Activated CD4-positive, alpha-beta T cell treated with anti-CD3 and anti-CD28 coated beads for 36 hours (primary cell): ENCODE measurements at regions of chr9 and their contacts with region 1.

Region 1: DNA sequence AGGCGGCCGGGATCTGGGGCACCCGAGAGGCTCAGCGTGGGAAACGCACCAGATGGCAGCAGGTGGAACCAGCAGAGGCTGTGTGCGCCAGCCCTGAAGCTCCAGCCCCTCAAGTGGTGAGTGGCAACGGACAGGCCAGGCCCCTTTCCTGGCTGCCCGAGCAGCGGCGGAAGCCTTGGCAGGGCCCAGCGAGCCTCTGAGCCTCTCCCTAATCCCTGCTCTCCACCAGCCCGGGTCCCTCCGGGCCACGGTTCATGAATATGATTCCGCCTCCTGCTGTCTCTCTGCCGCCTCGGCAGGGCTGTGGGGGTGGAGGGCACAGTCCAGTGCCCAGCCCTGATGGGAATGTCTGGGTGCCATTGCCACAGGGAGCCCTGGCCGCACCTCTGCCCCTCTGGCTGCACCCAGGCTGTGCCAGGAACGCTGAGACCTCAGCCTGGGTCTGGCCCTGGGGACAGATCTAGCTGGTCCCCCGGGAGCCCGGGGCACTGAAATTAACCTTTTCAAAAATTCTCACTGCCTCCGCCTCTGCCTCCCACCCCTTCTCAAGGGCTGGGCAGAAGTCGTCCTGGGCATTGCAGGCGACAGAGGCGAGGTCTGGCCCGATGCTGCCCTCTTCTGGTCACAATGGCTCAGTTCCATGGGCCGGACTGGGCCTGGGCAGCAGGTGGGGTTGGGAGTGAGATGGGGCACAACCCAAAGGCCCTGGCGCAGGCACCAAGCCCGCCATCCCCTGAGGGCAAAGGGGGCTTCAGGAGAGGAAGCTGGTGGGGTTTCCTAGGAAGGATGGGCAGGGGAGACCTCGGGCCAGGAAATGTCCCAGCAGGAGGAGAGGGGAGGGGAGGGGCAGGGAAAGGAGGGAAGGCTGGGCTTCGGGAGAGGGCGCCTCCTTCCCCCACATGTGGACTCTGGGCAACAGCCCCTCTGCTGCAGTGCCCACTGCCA is 20.3 kb downstream of the CCDC187 start:
- DNase-seq: peak; percentile 86
- ATAC-seq: peak; percentile 98
- H3K4me3 Mint-ChIP-seq: no peak overlapping the region
- H3K27ac Mint-ChIP-seq: no peak overlapping the region
- H3K4me1 Mint-ChIP-seq: peaks cover 4% of the 10 kb centered on the region
- H3K27me3 Mint-ChIP-seq: peaks cover 2% of the 10 kb centered on the region

Region 2: DNA sequence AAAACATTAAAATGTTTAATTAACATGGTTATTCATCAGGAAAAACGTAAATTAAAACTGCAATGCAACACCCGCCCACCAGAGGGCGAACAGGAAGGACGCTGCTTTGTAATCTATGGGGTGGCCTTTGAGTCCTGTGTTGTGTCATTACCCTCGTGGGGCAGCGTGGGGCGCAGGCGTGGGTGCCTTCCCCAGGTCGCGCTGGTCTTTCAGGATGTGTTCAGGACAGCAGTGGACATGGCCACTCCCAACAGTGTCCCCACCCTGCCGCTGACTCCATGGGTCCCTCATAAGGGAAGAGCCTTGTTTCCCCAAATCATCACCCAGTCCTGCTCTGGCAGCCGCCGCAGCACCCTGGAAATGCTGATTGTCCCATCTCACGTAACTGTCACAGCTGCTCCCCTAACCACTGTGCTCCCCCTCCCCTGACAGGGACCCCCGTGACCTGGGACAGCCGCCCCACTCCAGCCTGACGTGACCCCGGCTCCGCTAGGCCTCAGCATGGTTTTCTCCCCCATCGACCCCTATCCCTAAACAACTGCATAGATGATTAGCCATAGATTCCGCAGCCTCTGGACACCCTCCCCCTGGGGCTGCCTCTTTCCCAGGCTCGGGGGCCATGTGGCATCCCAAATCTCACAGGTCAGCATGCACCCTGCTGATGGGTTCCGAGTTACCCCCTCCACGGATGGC is 680.6 kb before region 1 on chr9:
- CTCF ChIA-PET with region 1: no interaction called
- POLR2A ChIA-PET with region 1: no interaction called
- intact Hi-C with region 1: loop called in 1 of 2 experiments (anchors 2 kb)
- DNase-seq: peak; percentile 75
- ATAC-seq: peak; percentile 58
- H3K4me3 Mint-ChIP-seq: no peak overlapping the region
- H3K27ac Mint-ChIP-seq: no peak overlapping the region
- H3K4me1 Mint-ChIP-seq: no peaks in the 10 kb centered on the region
- H3K27me3 Mint-ChIP-seq: peaks cover 10% of the 10 kb centered on the region

Region 3: DNA sequence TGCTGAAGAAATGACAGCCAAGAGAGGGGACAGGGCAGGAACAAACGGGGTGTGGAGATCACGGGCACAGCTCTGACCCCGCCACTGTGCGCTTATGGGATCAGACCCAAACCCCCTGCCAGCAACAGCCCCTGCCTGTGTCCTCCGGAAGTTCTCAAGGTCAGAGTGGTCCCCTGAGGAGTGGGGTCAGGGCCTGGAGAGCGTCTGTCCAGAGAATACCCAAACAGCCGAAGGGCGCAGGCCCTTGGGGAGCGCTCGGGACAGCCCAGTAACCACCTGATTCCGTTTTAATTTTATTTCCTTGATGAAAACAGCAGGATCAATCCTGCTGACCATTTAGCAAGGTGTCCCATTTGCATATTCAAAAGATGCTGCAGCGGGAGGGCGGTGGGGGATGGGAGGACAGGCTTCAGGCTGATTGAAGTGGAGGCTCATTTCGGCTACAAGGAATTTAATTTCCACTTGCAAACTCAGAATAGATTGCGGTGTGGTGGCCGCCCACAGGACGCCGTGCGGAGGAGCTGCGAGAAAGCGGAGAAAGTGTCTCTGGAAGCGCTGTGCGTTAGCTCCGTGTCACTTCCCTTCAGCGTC is 132.3 kb before region 1 on chr9:
- CTCF ChIA-PET with region 1: no interaction called
- POLR2A ChIA-PET with region 1: no interaction called
- intact Hi-C with region 1: loop called in 1 of 2 experiments (anchors 5 kb)
- DNase-seq: peak; percentile 27
- ATAC-seq: peak; percentile 9
- H3K4me3 Mint-ChIP-seq: no peak overlapping the region
- H3K27ac Mint-ChIP-seq: no peak overlapping the region
- H3K4me1 Mint-ChIP-seq: no peaks in the 10 kb centered on the region
- H3K27me3 Mint-ChIP-seq: peaks cover 5% of the 10 kb centered on the region

Region 4: DNA sequence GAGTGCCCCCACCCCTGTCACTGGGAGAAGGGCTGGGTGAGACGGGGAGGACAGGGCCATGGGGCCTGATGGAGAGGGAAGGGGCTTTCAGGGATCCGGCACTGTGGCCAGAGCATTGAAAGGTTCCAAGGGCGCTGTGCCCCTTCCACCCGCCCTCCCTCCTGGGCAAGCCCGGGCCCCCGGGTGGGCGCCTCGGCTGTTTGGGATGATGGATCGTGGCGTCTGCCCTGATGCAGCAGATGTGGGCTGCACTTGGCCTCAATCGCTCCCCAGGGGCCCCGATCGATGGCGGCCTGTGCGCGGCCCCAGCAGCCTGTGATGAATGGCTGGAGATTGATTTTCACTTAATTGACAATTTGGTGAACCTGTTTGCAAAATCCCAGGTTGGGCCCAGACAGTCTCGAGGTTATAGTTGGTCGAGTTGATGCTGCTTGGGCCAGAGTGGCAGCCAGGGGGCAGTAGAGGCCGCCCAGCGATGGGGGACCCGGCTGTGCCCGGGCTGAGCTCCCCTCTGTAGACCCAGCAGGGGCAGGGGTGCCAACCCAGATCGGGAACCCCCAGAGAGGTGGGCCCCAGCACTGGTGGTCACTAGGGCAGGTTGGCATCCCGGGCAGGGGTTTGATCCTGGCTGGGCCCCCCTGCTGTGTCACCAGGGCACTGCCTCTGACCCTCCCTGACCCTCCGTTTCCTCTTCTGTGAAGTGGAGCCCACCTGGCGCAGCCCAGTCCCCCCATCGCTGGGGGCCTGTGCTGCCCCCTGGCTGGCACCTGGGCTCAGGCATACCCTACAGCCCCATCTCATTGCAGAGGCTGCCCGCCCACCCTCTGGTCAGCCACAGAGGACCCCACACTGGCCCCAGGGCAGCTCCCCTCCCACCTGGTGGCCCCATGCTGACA is 113.3 kb before region 1 on chr9:
- CTCF ChIA-PET with region 1: interaction called, 6 read pairs
- POLR2A ChIA-PET with region 1: no interaction called
- intact Hi-C with region 1: loop called (anchors 1 kb)
- DNase-seq: peak; percentile 80
- ATAC-seq: peak; percentile 88
- H3K4me3 Mint-ChIP-seq: no peak overlapping the region
- H3K27ac Mint-ChIP-seq: no peak overlapping the region
- H3K4me1 Mint-ChIP-seq: no peaks in the 10 kb centered on the region
- H3K27me3 Mint-ChIP-seq: peaks cover 6% of the 10 kb centered on the region

Region 5: GRCh38 chr9:136211441-136212344 is 71.9 kb before region 1 on chr9:
- CTCF ChIA-PET with region 1: no interaction called
- POLR2A ChIA-PET with region 1: no interaction called
- intact Hi-C with region 1: no loop called
- DNase-seq: no peak
- ATAC-seq: no peak
- H3K4me3 Mint-ChIP-seq: no peak overlapping the region
- H3K27ac Mint-ChIP-seq: no peak overlapping the region
- H3K4me1 Mint-ChIP-seq: no peaks in the 10 kb centered on the region
- H3K27me3 Mint-ChIP-seq: no peaks in the 10 kb centered on the region

Region 6: DNA sequence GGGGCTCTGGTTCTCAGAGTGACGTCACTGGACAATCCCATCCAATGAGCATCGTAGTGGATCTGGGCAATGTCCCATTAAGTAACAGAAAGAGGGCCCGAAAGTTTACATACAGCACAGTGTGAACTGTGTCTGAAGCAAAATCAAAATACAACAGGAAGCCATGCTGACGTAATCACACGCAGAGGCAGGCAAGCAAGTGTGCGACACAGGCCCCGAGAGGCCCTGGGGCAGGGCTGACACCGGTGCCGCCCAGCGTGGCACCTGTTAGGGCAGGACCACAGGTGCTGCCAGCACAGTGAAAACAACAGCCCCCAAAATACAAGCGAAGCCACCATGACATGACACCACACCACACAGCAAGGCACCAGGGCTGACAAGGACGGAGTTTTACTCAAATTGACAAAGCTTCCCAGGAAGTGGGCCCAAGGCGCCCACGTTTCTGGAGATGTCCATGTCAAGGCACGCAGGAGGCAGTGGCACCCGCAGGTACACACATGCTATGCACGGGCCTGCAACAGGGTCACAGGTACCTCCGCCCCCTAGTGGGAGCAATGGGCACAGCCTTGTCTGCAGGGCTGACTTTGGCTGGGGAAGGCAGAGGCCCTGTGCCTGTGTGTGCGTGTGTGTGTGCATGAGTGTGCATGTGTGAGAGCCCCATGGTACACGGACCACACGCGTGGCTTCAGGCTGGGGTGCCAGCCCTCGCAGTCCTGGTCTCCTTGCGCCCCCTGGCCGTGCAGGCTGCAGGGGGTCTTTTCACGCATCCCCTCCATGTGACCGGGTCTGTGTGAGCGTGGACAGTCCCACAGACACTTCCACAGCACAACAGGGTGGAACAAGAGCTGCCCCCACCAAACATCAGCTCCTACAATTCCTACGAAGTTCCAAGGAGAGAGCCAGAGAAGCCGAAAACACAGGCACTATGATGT is 57.5 kb before region 1 on chr9:
- CTCF ChIA-PET with region 1: interaction called, 4 read pairs
- POLR2A ChIA-PET with region 1: no interaction called
- intact Hi-C with region 1: loop called in 1 of 2 experiments (anchors 5 kb)
- DNase-seq: peak; percentile 84
- ATAC-seq: peak; percentile 88
- H3K4me3 Mint-ChIP-seq: peak overlapping the region; percentile 24
- H3K27ac Mint-ChIP-seq: peak overlapping the region; percentile 44
- H3K4me1 Mint-ChIP-seq: peaks cover 20% of the 10 kb centered on the region
- H3K27me3 Mint-ChIP-seq: no peaks in the 10 kb centered on the region